GM12878 (cell line): ENCODE measurements at regions of chr9 and their contacts with region 1.

Region 1: GRCh38 chr9:110623462-110624025 is 44.0 kb upstream of the SVEP1 start:
- DNase-seq: peak; percentile 28
- ATAC-seq: peak; percentile 38
- H3K4me3 ChIP-seq: no peak overlapping the region
- H3K27ac ChIP-seq: no peak overlapping the region
- H3K4me1 ChIP-seq: peaks cover 6% of the 10 kb centered on the region
- H3K27me3 ChIP-seq: no peaks in the 10 kb centered on the region; a peak in 1 of 4 replicates
- CTCF ChIP-seq: peak; percentile 46 to 74 (median 55); a peak in 5 of 6 replicates
- EP300 ChIP-seq: no peak
- POLR2A ChIP-seq: no peak
- RAD21 ChIP-seq: peak; percentile 76

Region 2: DNA sequence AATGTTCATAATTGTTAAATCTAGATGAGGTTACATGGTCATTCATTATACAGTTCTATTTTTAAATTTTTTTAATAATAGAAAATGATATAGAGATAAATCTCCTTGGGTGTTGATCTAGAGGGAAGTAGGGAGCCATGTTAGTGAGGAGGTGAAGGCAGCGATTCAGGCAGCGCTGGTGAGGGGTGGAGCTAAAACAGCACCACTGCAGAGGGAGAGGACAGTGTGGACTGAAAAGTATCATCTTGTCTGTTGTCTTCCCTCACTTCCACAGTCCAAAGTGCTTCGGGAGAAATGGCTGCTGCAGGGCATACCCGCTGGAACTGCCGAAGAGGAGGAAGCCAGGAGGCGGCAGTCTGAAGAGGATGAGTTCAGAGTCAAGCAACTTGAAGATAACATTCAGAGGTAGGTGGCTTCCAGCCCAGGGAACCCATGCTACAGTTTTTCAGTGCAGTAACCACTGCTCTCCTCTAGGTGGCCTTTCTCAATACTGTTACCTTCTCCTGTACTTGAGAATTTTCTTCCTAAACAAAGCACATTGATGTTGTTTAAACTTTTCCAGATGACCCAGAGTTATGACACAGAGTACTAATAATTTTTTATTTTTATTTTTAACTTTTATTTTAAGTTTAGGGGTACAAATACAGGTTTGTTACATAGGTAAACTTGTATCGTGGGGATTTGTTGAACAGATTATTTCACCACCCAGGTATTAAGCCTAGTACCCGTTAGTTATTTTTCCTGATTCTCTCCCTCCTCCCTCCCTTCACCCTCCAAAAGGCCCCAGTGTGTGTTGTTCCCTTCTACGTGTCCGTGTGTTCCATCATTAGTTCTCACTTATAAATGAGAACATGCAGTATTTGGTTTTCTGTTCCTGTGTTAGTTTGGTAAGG is 743.0 kb before region 1 on chr9:
- CTCF ChIA-PET with region 1: no interaction called
- POLR2A ChIA-PET with region 1: no interaction called
- RAD21 ChIA-PET with region 1: no interaction called
- SMC1A ChIA-PET with region 1: no interaction called
- in situ Hi-C with region 1: loop called (anchors 25 kb)
- intact Hi-C with region 1: no loop called
- DNase-seq: no peak
- ATAC-seq: peak; percentile 96
- H3K4me3 ChIP-seq: no peak overlapping the region
- H3K27ac ChIP-seq: no peak overlapping the region
- H3K4me1 ChIP-seq: no peaks in the 10 kb centered on the region
- H3K27me3 ChIP-seq: 0 out of 4 replicates have a peak, but pooled peaks cover 0 to 3% of the 10 kb centered on the region in 2 experiments
- CTCF ChIP-seq: peak; percentile 57 to 76 (median 75)
- EP300 ChIP-seq: no peak
- POLR2A ChIP-seq: no peak
- RAD21 ChIP-seq: peak; percentile 43; the same call in 1 of the 2 replicates

Region 3: DNA sequence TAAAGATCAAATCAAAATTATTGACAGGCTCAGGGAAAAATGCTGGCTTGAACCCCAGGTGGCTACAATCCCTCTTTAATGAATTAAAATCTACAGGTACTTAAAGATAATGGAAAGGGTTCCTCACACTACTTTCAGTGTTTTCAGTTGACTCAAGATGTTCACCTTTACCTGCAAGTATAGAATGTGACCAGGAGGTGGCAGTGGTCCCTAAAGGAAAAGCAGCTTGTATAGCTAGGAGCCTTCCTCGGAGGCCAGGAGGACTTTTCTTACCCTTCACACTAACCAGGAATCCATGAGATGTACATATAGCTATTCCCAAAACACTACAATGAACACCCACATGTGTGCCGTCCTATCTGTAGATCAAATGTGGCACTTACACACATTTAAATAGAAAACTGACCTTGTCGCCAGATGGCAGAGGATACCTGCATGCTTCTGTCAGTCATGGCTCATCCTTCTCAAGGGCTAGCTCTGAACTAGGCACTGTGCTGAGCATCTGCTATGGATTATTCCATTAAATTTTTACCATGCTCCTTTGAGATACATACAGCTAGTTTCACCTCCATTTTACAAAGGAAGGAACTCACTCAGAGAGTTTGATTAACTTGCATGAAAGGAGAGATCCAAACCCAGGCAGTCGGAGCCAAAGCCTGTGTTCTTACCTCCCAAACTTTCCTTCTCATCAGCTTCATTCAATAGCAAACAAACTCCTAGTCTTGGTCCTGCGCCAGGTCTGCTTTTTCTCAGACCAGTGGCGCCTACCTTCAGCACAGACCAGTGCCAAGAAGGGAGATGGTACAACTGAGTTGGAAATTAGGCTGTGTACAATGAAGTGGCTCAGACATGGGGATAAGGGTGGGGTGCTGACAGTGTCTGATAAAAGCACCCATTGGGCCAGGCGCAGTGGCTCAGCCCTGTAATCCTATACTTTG is 440.1 kb before region 1 on chr9:
- CTCF ChIA-PET with region 1: interaction called, 57 read pairs
- POLR2A ChIA-PET with region 1: no interaction called
- RAD21 ChIA-PET with region 1: interaction called, 24 read pairs
- SMC1A ChIA-PET with region 1: interaction called, 21 read pairs
- in situ Hi-C with region 1: loop called (anchors 5 kb)
- intact Hi-C with region 1: loop called (anchors 1 kb)
- DNase-seq: peak; percentile 25
- ATAC-seq: peak; percentile 91
- H3K4me3 ChIP-seq: no peak overlapping the region
- H3K27ac ChIP-seq: no peak overlapping the region
- H3K4me1 ChIP-seq: no peaks in the 10 kb centered on the region
- H3K27me3 ChIP-seq: no peaks in the 10 kb centered on the region
- CTCF ChIP-seq: peak; percentile 75 to 79 (median 76); a peak in 5 of 6 replicates
- EP300 ChIP-seq: no peak
- POLR2A ChIP-seq: no peak
- RAD21 ChIP-seq: peak; percentile 91

Region 4: GRCh38 chr9:110427497-110428104 is 195.9 kb before region 1 on chr9:
- CTCF ChIA-PET with region 1: interaction called, 35 read pairs
- POLR2A ChIA-PET with region 1: interaction called, 3 read pairs
- RAD21 ChIA-PET with region 1: interaction called, 15 read pairs
- SMC1A ChIA-PET with region 1: interaction called, 24 read pairs
- in situ Hi-C with region 1: no loop called
- intact Hi-C with region 1: loop called (anchors 2 kb)
- DNase-seq: no peak
- ATAC-seq: peak; percentile 86
- H3K4me3 ChIP-seq: no peak overlapping the region
- H3K27ac ChIP-seq: no peak overlapping the region
- H3K4me1 ChIP-seq: no peaks in the 10 kb centered on the region
- H3K27me3 ChIP-seq: no peaks in the 10 kb centered on the region
- CTCF ChIP-seq: peak; percentile 76 to 79 (median 77)
- EP300 ChIP-seq: no peak
- POLR2A ChIP-seq: no peak
- RAD21 ChIP-seq: peak; percentile 53

Region 5: GRCh38 chr9:110604171-110604601 is 19.4 kb before region 1 on chr9:
- CTCF ChIA-PET with region 1: interaction called, 12 read pairs
- POLR2A ChIA-PET with region 1: no interaction called
- RAD21 ChIA-PET with region 1: interaction called, 3 read pairs
- SMC1A ChIA-PET with region 1: interaction called, 5 read pairs
- in situ Hi-C with region 1: no loop called
- intact Hi-C with region 1: no loop called
- DNase-seq: no peak
- ATAC-seq: peak; percentile 56
- H3K4me3 ChIP-seq: no peak overlapping the region
- H3K27ac ChIP-seq: no peak overlapping the region
- H3K4me1 ChIP-seq: no peaks in the 10 kb centered on the region
- H3K27me3 ChIP-seq: no peaks in the 10 kb centered on the region
- CTCF ChIP-seq: no peak
- EP300 ChIP-seq: no peak
- POLR2A ChIP-seq: no peak
- RAD21 ChIP-seq: no peak